Lower leg skin (tissue), 4 donors: ENCODE measurements at regions of chr4 and their contacts with region 1.

Region 1: GRCh38 chr4:127868196-127868595 is 12.5 kb upstream of the PLK4 start:
- DNase-seq: no peak
- H3K4me3 ChIP-seq: no peak overlapping the region
- CTCF ChIP-seq: no peak
- POLR2A ChIP-seq: no peak

Region 2: DNA sequence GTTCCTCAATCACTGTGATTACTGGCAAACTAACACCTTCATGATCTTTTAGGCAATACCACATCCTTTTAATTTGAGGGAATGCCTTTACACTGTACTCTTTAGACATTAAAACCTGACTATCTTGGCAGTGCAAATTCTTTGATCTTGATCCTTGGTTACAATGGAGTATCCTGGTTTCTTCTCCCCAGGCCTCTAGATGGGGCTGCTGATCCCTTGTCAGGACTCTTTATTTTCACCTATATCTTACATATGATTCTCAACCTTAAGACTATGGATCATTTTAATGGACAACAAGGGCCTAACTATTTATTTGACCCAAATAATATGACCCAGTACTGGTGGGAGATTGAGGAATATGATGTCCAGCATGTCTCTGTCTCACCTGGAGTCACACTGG is 1240.9 kb before region 1 on chr4:
- intact Hi-C with region 1: no loop called
- DNase-seq: no peak
- H3K4me3 ChIP-seq: no peak overlapping the region
- CTCF ChIP-seq: no peak
- POLR2A ChIP-seq: no peak

Region 3: GRCh38 chr4:127155116-127155515 is 713.1 kb before region 1 on chr4:
- intact Hi-C with region 1: loop called (anchors 10 kb)
- DNase-seq: no peak
- H3K4me3 ChIP-seq: no peak overlapping the region
- CTCF ChIP-seq: no peak
- POLR2A ChIP-seq: no peak